ENCODE measurements at regions of chr12 and their contacts with region 1.

Region 1: DNA sequence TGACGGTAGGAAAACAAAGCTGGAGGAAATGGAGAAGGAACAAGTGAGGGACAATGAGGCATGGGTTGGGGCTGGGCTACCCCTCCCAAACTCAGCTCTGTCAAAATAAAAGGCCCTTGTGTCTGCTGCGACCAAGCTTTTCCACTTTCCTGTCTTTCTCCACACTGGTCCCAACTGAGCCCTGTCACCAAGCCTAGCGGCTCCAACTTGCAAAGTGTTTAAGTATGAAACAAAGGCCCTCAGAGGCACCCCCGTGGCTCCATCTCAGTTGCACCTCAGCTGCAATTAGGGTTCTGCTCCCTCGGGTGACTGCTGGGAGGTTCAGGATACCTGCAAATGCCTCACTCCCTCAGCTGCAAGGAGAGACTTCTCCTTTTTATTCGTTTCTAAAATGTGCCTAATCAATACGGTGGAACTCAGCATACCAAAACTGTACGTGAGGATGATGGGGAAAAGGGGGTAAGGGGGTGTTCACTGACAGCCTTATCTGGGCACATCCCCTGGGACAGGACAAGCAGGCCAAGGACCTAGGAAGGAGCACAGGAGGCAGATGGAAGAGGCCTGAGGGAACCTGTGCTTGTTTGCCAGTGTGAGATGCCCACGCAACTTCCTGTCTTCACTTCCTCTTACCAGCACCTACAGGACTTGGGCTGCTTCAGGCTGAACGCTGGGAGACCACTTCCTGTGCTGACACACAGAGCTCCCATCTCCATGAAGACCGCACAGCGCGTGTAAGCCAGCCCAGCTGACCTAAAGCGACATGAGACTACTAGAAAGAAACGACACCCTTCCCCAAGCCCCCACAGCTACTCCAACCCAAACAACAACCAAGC is 8.9 kb downstream of the VAMP1 start:
- DNase-seq: peak; percentile 82 to 96 (median 86)
- H3K4me3 ChIP-seq: peak overlapping the region in 1 of 2 donors; percentile 42
- H3K4me3 Mint-ChIP-seq: peak overlapping the region; percentile 53 to 89 (median 80)
- H3K27ac ChIP-seq: peak overlapping the region; percentile 82
- H3K27ac Mint-ChIP-seq: peak overlapping the region; percentile 90 to 99 (median 98)
- H3K4me1 ChIP-seq: peaks cover 89% of the 10 kb centered on the region
- H3K4me1 Mint-ChIP-seq: peaks cover 65 to 93% (median 80%) of the 10 kb centered on the region in 4 donors
- H3K27me3 ChIP-seq: no peaks in the 10 kb centered on the region
- H3K27me3 Mint-ChIP-seq: no peaks in the 10 kb centered on the region

Region 2: GRCh38 chr12:6341417-6342139 is 120.0 kb before region 1 on chr12 and contains the start of gene TNFRSF1A:
- CTCF ChIA-PET with region 1: interaction called, 56 read pairs
- POLR2A ChIA-PET with region 1: interaction called, 80 read pairs
- intact Hi-C with region 1: no loop called
- DNase-seq: peak; percentile 44 to 66 (median 56)
- H3K4me3 ChIP-seq: peak within 1 kb of the TSS; percentile 87 to 97
- H3K4me3 Mint-ChIP-seq: no peak within 1 kb of the TSS
- H3K27ac ChIP-seq: peak within 1 kb of the TSS; percentile 92
- H3K27ac Mint-ChIP-seq: peak within 1 kb of the TSS in 2 of 7 donors; percentile 87 to 97
- H3K4me1 ChIP-seq: peaks cover 74% of the 10 kb centered on the region
- H3K4me1 Mint-ChIP-seq: peaks cover 28 to 40% (median 35%) of the 10 kb centered on the region in 4 donors
- H3K27me3 ChIP-seq: no peaks in the 10 kb centered on the region
- H3K27me3 Mint-ChIP-seq: no peaks in the 10 kb centered on the region
- total RNA-seq, gene TNFRSF1A: 80.7 to 86.7 TPM

Region 3: DNA sequence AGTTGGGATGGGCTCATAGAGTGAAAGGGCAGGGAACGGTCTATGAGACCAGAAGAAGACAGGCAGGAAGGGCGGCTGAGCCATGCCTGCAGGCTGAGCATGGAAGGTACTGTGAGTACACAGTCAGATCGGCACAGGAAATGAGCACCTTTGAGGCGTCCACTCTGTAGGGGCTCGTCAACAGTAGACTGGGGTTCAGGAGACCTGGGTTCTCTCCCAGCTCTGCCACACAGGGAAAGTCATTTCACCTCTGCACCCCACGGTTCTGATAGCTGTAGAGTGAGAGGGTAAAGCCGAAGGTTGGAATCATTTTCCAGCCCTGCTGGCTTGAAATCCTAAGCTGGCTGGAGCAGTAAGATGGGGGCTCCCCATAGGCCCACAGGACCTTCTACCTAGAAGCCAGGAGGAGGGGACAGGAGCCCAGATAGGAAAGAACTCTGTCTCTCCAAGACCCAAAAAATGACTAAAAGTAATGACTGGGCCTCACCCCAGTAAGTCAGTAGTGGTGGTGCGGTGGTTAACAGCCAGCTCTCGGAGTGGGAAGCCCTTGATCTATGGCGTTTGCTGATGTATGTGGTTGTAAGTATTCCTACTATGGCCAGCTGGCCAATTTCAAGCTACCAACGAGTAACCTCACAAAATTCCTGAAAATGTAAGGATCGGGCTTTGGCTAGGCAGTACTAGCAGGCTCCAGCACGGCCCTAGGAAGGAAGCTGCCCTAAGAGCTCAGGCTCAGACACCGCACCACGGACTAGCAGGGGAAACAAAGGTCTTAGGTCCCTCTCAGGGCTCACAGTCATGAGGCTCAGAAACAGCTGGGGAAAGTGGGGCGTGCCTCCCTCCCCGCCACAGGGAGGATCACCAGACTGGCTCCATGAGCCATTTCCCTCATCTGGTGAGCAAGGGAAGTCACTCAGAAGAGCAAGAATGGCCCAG is 27.1 kb before region 1 on chr12:
- CTCF ChIA-PET with region 1: interaction called, 20 read pairs
- POLR2A ChIA-PET with region 1: interaction called, 728 read pairs
- intact Hi-C with region 1: no loop called
- DNase-seq: peak in 4 of 5 donors; percentile 24 to 58 (median 38)
- H3K4me3 ChIP-seq: no peak overlapping the region
- H3K4me3 Mint-ChIP-seq: peak overlapping the region in 7 of 8 donors; percentile 36 to 72 (median 58)
- H3K27ac ChIP-seq: no peak overlapping the region
- H3K27ac Mint-ChIP-seq: peak overlapping the region in 5 of 7 donors; percentile 78 to 90 (median 82)
- H3K4me1 ChIP-seq: peaks cover 29% of the 10 kb centered on the region
- H3K4me1 Mint-ChIP-seq: peaks cover 13 to 42% (median 28%) of the 10 kb centered on the region in 4 donors
- H3K27me3 ChIP-seq: no peaks in the 10 kb centered on the region
- H3K27me3 Mint-ChIP-seq: no peaks in the 10 kb centered on the region

Region 4: DNA sequence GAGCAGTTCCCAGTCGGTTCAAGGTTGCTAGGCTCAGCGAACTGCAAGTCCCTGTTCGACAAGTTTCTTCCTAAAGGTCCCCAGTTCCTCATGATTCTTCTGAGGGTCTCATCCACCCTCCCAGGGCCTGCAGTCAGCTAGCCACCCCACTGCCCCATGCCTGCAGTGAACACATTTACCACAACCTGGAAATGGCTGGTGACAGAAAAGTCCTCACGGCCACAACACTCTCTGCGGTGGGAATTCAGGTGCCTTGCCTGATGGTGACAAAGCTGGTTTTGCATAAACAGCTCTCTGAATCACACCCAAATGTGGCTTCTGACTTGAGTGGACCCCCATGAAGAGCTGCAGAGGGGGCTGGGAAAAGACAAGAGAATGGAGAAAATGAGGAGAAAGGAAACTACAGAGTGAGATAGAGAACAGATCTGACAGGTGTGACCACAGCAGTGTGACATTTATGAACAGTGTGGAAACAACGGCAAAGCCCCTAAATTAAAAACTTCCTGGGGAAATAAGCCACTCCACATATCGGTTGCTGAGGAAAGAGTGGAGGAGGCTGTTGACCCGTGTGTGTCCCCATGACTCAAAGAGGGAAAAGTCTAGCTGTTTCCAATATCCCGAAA is 18.1 kb before region 1 on chr12:
- CTCF ChIA-PET with region 1: interaction called, 247 read pairs
- POLR2A ChIA-PET with region 1: interaction called, 728 read pairs
- intact Hi-C with region 1: loop called (anchors 1 kb)
- DNase-seq: no peak
- H3K4me3 ChIP-seq: no peak overlapping the region
- H3K4me3 Mint-ChIP-seq: peak overlapping the region; percentile 83 to 99 (median 96)
- H3K27ac ChIP-seq: peak overlapping the region; percentile 41
- H3K27ac Mint-ChIP-seq: peak overlapping the region; percentile 80 to 99 (median 92)
- H3K4me1 ChIP-seq: peaks cover 37% of the 10 kb centered on the region
- H3K4me1 Mint-ChIP-seq: peaks cover 28 to 64% (median 40%) of the 10 kb centered on the region in 4 donors
- H3K27me3 ChIP-seq: no peaks in the 10 kb centered on the region
- H3K27me3 Mint-ChIP-seq: no peaks in the 10 kb centered on the region

Region 5: GRCh38 chr12:6451348-6452244 is 10.0 kb before region 1 on chr12 and contains the start of gene TAPBPL:
- CTCF ChIA-PET with region 1: interaction called, 247 read pairs
- POLR2A ChIA-PET with region 1: interaction called, 728 read pairs
- intact Hi-C with region 1: loop called (anchors 1 kb)
- DNase-seq: peak; percentile 85 to 94 (median 86)
- H3K4me3 ChIP-seq: peak within 1 kb of the TSS; percentile 80
- H3K4me3 Mint-ChIP-seq: peak within 1 kb of the TSS; percentile 96 to 100 (median 98)
- H3K27ac ChIP-seq: peak within 1 kb of the TSS; percentile 99
- H3K27ac Mint-ChIP-seq: peak within 1 kb of the TSS; percentile 95 to 99 (median 99)
- H3K4me1 ChIP-seq: peaks cover 68% of the 10 kb centered on the region
- H3K4me1 Mint-ChIP-seq: peaks cover 45 to 79% (median 64%) of the 10 kb centered on the region in 4 donors
- H3K27me3 ChIP-seq: no peaks in the 10 kb centered on the region
- H3K27me3 Mint-ChIP-seq: no peaks in the 10 kb centered on the region
- total RNA-seq, gene TAPBPL: 66.4 to 66.9 TPM

Region 6: DNA sequence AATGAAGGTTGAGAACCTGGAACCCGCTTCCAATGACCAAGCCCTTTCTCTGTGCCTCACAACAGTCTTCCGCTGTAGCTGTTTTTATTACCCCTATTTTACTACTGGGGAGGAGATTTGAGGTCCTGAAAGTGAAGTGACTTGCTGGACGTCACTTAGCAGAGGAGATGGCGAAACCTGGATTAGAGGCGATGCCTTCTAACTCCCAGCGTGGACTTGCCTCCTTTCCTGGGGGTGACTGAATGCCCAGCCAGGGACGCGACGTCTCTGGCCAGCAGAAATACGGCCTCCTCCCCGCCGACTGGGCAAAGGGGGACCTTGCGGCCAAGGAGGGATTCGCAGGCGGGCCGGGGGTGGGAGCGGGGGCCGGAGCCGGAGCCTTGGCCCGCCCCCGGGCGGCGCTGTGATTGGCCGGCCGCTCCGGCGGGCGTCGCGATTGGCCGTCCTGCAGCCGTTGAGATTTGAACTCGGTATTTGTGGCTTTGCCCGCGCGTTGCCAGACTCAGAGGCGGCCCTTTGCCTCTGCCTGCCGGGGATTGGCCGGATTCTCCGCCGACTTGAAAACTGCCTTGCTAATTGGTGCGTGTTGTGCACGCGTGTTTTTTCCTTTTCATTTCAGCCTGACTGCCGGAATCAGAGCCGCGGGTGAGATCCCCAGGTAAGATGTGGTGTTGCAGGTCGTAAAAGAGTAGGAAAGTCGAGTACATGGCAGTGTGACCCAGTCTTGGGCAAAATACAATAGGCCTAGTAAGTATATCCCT is 32.1 kb after region 1 on chr12 and contains the start of gene NCAPD2:
- CTCF ChIA-PET with region 1: interaction called, 10 read pairs
- POLR2A ChIA-PET with region 1: interaction called, 76 read pairs
- intact Hi-C with region 1: loop called (anchors 2 kb)
- DNase-seq: peak; percentile 96 to 97 (median 96)
- H3K4me3 ChIP-seq: peak within 1 kb of the TSS; percentile 98 to 99
- H3K4me3 Mint-ChIP-seq: peak within 1 kb of the TSS; percentile 89 to 98 (median 96)
- H3K27ac ChIP-seq: peak within 1 kb of the TSS; percentile 87
- H3K27ac Mint-ChIP-seq: peak within 1 kb of the TSS; percentile 90 to 99 (median 97)
- H3K4me1 ChIP-seq: peaks cover 37% of the 10 kb centered on the region
- H3K4me1 Mint-ChIP-seq: peaks cover 26 to 46% (median 35%) of the 10 kb centered on the region in 4 donors
- H3K27me3 ChIP-seq: no peaks in the 10 kb centered on the region
- H3K27me3 Mint-ChIP-seq: no peaks in the 10 kb centered on the region
- total RNA-seq, gene NCAPD2: 38.1 to 39.8 TPM

Measured in CD4-positive, alpha-beta memory T cell (primary cell).